CD4-positive, alpha-beta memory T cell (primary cell): ENCODE measurements at regions of chr20 and their contacts with region 1.

Region 1: DNA sequence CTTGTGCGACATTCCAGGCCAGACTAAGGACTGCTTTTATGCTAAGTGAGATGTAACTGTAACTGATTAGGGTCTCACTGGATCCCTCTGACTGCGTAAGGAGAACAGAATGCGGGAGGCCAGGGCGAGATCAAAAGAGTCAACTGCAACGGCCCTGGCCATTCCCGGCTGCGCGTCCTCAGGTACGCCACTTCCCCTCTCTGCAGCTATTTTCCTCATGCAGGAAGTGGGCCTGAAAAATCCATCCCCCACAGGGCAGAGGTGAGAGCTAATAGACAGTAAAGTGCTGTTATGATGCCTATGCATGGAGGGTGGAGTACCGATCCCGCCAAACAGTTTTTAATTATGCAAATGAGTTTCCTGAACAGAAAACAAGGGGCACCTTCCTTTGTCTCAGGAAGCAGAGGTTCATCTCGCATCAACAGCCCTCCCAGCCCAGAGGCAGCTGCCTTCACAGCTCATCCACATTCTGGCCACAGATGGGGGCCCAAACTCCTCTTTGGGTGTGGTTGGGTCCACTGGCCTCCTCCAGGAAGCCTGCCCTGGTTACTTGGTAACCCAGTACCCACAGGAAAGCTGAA is 9.3 kb downstream of the PREX1 start:
- DNase-seq: peak; percentile 48 to 72 (median 54)
- H3K4me3 ChIP-seq: peak overlapping the region; percentile 37 to 57
- H3K4me3 Mint-ChIP-seq: peak overlapping the region; percentile 84 to 99 (median 95)
- H3K27ac ChIP-seq: peak overlapping the region; percentile 75
- H3K27ac Mint-ChIP-seq: peak overlapping the region in 2 of 7 donors; percentile 97 to 98
- H3K4me1 ChIP-seq: peaks cover 99% of the 10 kb centered on the region
- H3K4me1 Mint-ChIP-seq: peaks cover 0 to 75% (median 33%) of the 10 kb centered on the region in 4 donors
- H3K27me3 ChIP-seq: no peaks in the 10 kb centered on the region
- H3K27me3 Mint-ChIP-seq: no peaks in the 10 kb centered on the region

Region 2: GRCh38 chr20:48635433-48636310 is 182.8 kb before region 1 on chr20:
- CTCF ChIA-PET with region 1: no interaction called
- POLR2A ChIA-PET with region 1: no interaction called
- intact Hi-C with region 1: no loop called
- DNase-seq: peak in 4 of 5 donors; percentile 58 to 66 (median 60)
- H3K4me3 ChIP-seq: no peak overlapping the region
- H3K4me3 Mint-ChIP-seq: peak overlapping the region in 1 of 8 donors; percentile 57
- H3K27ac ChIP-seq: no peak overlapping the region
- H3K27ac Mint-ChIP-seq: peak overlapping the region; percentile 52 to 89 (median 68)
- H3K4me1 ChIP-seq: no peaks in the 10 kb centered on the region
- H3K4me1 Mint-ChIP-seq: peaks cover 0 to 9% (median 3%) of the 10 kb centered on the region in 4 donors
- H3K27me3 ChIP-seq: no peaks in the 10 kb centered on the region
- H3K27me3 Mint-ChIP-seq: no peaks in the 10 kb centered on the region

Region 3: DNA sequence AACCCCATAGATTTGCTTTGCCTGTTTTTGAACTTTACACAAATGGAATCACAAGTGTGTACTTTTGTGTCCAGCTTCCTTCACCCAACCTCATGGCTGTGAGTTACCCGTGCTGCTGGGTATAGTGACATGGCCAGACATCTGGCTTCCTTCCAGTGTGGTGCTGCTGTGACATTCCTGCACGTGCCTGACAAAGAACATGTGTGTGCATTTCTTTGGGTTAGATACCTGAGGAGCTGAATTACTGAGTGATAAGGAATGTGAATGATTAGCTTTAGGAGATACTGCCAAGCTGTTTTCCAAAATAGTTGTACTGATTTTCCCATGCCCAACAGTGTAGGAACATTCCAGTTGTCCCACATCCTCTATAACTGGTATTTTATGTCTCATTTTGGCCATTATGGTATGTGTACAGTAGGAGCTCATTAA is 123.3 kb before region 1 on chr20:
- CTCF ChIA-PET with region 1: no interaction called
- POLR2A ChIA-PET with region 1: no interaction called
- intact Hi-C with region 1: no loop called
- DNase-seq: no peak
- H3K4me3 ChIP-seq: no peak overlapping the region
- H3K4me3 Mint-ChIP-seq: no peak overlapping the region
- H3K27ac ChIP-seq: no peak overlapping the region
- H3K27ac Mint-ChIP-seq: peak overlapping the region in 4 of 7 donors; percentile 47 to 90 (median 76)
- H3K4me1 ChIP-seq: no peaks in the 10 kb centered on the region
- H3K4me1 Mint-ChIP-seq: peaks cover 15 to 41% (median 28%) of the 10 kb centered on the region in 4 donors
- H3K27me3 ChIP-seq: no peaks in the 10 kb centered on the region
- H3K27me3 Mint-ChIP-seq: no peaks in the 10 kb centered on the region

Region 4: GRCh38 chr20:48718857-48719578 is 99.5 kb before region 1 on chr20:
- CTCF ChIA-PET with region 1: interaction called, 3 read pairs
- POLR2A ChIA-PET with region 1: interaction called, 23 read pairs
- intact Hi-C with region 1: no loop called
- DNase-seq: peak; percentile 36 to 63 (median 41)
- H3K4me3 ChIP-seq: peak overlapping the region in 1 of 2 donors; percentile 26
- H3K4me3 Mint-ChIP-seq: peak overlapping the region; percentile 41 to 83 (median 76)
- H3K27ac ChIP-seq: peak overlapping the region; percentile 41
- H3K27ac Mint-ChIP-seq: peak overlapping the region; percentile 90 to 95 (median 92)
- H3K4me1 ChIP-seq: peaks cover 100% of the 10 kb centered on the region
- H3K4me1 Mint-ChIP-seq: peaks cover 83 to 99% (median 91%) of the 10 kb centered on the region in 4 donors
- H3K27me3 ChIP-seq: no peaks in the 10 kb centered on the region
- H3K27me3 Mint-ChIP-seq: no peaks in the 10 kb centered on the region

Region 5: GRCh38 chr20:48750947-48751635 is 67.4 kb before region 1 on chr20:
- CTCF ChIA-PET with region 1: interaction called, 3 read pairs
- POLR2A ChIA-PET with region 1: interaction called, 14 read pairs
- intact Hi-C with region 1: no loop called
- DNase-seq: peak; percentile 53 to 73 (median 58)
- H3K4me3 ChIP-seq: peak overlapping the region; percentile 39
- H3K4me3 Mint-ChIP-seq: peak overlapping the region; percentile 65 to 85 (median 75)
- H3K27ac ChIP-seq: peak overlapping the region; percentile 55
- H3K27ac Mint-ChIP-seq: peak overlapping the region; percentile 84 to 95 (median 89)
- H3K4me1 ChIP-seq: peaks cover 76% of the 10 kb centered on the region
- H3K4me1 Mint-ChIP-seq: peaks cover 53 to 89% (median 76%) of the 10 kb centered on the region in 4 donors
- H3K27me3 ChIP-seq: no peaks in the 10 kb centered on the region
- H3K27me3 Mint-ChIP-seq: no peaks in the 10 kb centered on the region

Region 6: DNA sequence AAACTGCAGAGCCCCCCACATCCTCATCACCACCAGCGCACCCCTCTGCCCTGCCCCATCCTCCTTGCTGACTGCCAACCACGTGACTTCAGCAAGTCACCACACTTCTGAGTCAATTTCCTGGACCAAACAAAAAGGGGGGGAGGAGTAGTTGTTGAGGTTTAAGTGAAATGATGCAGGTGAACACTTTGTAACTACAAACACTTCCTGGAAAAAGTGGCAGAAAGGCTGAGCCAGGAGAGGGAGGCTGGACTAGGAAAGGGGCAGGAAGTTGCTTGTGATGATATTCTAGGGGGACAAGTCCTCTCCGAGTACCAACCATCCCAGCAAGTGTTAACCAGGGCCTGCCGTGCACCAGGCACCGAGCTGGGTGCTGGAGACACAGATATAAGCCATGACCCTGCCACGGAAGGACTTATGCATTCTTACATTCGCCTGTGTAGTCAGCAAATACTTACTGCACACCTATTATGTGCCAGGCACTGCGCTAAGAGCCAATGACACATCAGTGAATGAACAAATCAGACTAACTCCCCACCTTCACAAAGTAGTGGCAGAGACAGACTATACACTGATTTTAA is 58.0 kb before region 1 on chr20:
- CTCF ChIA-PET with region 1: interaction called, 4 read pairs
- POLR2A ChIA-PET with region 1: interaction called, 15 read pairs
- intact Hi-C with region 1: loop called (anchors 1 kb)
- DNase-seq: peak; percentile 82 to 92 (median 84)
- H3K4me3 ChIP-seq: peak overlapping the region; percentile 20 to 54
- H3K4me3 Mint-ChIP-seq: peak overlapping the region; percentile 70 to 89 (median 85)
- H3K27ac ChIP-seq: peak overlapping the region; percentile 86
- H3K27ac Mint-ChIP-seq: peak overlapping the region; percentile 87 to 99 (median 98)
- H3K4me1 ChIP-seq: peaks cover 87% of the 10 kb centered on the region
- H3K4me1 Mint-ChIP-seq: peaks cover 64 to 97% (median 82%) of the 10 kb centered on the region in 4 donors
- H3K27me3 ChIP-seq: no peaks in the 10 kb centered on the region
- H3K27me3 Mint-ChIP-seq: no peaks in the 10 kb centered on the region